RWPE1 (cell line): ENCODE measurements at regions of chr13 and their contacts with region 1.

Region 1: DNA sequence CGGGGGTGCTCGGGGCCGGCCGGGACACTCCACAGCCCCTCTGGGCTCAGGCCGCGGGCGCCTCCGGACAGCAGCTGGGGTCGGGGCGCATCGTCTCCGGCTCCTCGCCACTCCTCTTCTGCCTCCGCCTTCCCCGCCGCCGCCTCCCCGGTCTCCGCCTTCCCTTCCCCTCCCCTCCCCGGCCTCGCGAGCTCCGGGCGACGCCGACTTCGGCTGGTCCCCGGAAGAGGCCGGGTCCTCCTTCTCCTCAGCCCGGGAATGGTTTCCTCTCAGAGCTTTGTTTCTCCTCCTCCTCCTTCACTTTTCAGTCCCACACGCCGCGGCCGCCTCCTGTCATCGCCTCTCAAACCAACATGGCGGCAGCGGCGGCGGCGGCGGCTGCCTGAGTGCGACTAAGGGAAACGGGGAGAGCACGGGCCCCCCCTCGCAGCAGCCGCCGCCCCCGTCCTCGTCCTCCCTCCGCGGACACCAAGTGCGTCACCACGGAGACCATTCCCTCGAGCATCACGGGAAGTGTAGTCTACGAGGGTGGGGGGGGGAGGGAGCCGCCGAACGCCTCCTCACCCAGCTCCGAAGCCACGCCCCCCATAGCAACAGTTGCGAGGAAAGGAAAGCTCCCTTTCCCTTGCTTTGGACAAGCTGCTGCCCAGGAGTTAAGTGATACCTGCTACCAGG is at the start of gene UBL3:
- DNase-seq: peak; percentile 97
- H3K27ac ChIP-seq: peak within 1 kb of the TSS; percentile 96
- CTCF ChIP-seq: no peak

Region 2: DNA sequence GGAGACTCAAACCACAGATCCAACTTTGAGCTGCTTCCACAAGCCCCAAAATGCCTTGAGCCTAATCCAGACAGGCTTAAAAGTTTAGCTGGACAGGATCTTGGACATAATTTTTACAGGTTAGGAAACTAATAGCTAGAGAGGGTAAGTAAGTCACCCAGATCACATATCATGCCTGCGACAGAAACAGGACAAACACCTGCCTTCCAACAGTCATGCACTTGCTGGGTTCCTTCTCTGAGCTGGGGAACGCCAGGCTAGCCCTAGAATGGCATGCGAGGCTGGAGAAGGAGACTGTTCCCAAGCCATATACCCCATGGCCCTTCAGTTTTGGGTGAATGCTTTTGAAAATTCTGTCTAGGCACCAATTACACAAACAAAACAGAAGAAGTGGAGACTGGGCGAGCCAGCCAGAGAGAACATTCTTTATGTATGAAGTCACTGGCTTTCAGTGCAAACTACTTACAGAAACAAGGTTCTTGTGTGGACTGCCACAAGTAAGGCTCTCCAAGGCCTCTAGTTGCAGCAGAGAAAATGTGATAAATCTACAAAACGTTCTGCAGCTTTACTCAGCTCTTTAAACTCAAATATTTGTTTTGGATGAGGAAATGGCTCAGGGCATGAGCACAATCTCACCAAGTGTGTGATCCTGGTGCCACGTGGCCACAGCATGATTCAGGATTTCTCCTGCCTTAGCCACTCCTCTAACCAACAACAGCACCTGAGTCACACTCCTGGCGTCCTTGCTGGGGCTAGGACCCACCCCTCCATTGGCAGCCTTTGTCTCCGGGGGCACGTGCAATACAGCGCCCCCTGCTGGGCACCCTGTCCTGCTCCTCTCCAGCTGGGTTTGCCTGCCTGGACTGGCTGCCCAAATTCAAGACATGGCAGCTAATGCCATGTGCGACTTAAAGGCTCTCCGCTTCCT is 73.5 kb after region 1 on chr13:
- CTCF ChIA-PET with region 1: interaction called, 12 read pairs
- POLR2A ChIA-PET with region 1: interaction called, 5 read pairs
- DNase-seq: peak; percentile 96
- H3K27ac ChIP-seq: peak overlapping the region; percentile 96
- CTCF ChIP-seq: peak; percentile 90